GM12878 (cell line): ENCODE measurements at regions of chr6 and their contacts with region 1.

Region 1: DNA sequence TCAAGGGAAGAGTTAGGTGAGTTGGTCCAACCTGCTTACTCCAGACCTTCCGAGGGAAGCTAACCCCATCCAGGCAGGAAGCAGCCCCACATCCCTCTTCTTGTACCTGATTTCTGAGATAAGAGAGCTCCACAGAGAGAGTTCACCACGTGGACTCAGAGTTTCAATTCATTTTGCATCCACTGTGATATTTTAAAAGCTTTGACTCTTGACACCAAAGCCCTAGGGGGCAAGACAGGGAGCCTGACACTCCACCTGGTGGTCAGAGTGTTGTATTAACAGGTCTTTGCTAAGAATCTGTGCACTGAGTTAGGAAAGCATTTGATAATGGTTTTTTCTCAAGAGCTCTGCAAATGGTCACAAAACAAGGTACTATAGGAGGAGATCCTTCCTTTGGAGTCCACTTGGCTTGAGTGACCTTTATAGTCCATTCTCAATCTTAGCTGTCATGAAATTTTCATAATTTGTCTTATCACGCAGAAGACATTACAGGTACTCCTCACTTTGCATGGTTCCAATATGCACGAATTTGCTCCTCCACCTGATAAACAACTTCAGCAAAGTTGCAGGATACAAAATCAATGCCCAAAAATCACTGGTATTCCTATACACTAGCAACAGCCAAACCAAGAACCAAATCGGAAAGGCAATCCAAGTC is 56.2 kb upstream of the RIPOR2 start:
- DNase-seq: peak; percentile 54
- ATAC-seq: peak; percentile 98
- H3K4me3 ChIP-seq: no peak overlapping the region
- H3K27ac ChIP-seq: no peak overlapping the region
- H3K4me1 ChIP-seq: peaks cover 6% of the 10 kb centered on the region
- H3K27me3 ChIP-seq: no peaks in the 10 kb centered on the region
- CTCF ChIP-seq: peak; percentile 77 to 81 (median 79)
- EP300 ChIP-seq: no peak
- POLR2A ChIP-seq: no peak
- RAD21 ChIP-seq: peak; percentile 99

Region 2: GRCh38 chr6:24861934-24862333 is 130.0 kb before region 1 on chr6:
- CTCF ChIA-PET with region 1: interaction called, 230 read pairs
- POLR2A ChIA-PET with region 1: interaction called, 3 read pairs
- RAD21 ChIA-PET with region 1: interaction called, 160 read pairs
- SMC1A ChIA-PET with region 1: interaction called, 243 read pairs
- in situ Hi-C with region 1: no loop called
- intact Hi-C with region 1: no loop called
- DNase-seq: peak; percentile 65
- ATAC-seq: peak; percentile 93
- H3K4me3 ChIP-seq: peak overlapping the region; percentile 24; the same call in 1 of the 2 replicates
- H3K27ac ChIP-seq: peak overlapping the region; percentile 2; the same call in 1 of the 2 replicates
- H3K4me1 ChIP-seq: peaks cover 32% of the 10 kb centered on the region
- H3K27me3 ChIP-seq: no peaks in the 10 kb centered on the region
- CTCF ChIP-seq: no peak
- EP300 ChIP-seq: peak; percentile 20 to 46; a peak in 1 of 4 replicates
- POLR2A ChIP-seq: no peak
- RAD21 ChIP-seq: no peak

Region 3: GRCh38 chr6:24902782-24903181 is 89.2 kb before region 1 on chr6:
- CTCF ChIA-PET with region 1: interaction called, 90 read pairs
- POLR2A ChIA-PET with region 1: no interaction called
- RAD21 ChIA-PET with region 1: interaction called, 80 read pairs
- SMC1A ChIA-PET with region 1: interaction called, 93 read pairs
- in situ Hi-C with region 1: no loop called
- intact Hi-C with region 1: no loop called
- DNase-seq: no peak
- ATAC-seq: no peak
- H3K4me3 ChIP-seq: no peak overlapping the region
- H3K27ac ChIP-seq: no peak overlapping the region
- H3K4me1 ChIP-seq: no peaks in the 10 kb centered on the region
- H3K27me3 ChIP-seq: no peaks in the 10 kb centered on the region
- CTCF ChIP-seq: no peak
- EP300 ChIP-seq: no peak
- POLR2A ChIP-seq: no peak
- RAD21 ChIP-seq: no peak

Region 4: DNA sequence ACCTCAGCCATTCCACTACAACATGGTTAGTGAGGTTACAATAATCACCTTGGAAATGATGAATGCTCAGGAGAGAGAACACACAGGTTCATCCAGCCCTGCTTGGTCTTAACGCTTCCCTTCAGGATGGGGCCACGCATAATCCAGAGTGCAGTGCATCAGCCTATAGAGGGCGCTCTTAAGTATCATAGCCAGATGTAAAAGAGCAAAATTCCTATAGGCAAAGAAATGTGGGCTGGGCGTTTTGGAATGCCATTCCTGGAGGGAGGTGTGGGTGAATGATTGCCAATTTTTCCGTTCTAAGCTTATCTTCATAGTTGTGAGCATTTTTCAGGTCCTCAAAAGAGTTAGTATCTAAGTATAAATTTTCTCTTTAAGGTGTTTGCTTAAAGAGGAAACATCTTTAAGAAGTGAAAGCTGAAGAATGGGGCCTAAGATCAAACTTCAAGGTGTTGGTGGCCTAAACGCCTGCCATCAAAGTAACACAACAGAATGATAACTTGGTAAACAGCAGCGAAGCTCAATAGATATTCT is 58.0 kb before region 1 on chr6:
- CTCF ChIA-PET with region 1: interaction called, 376 read pairs
- POLR2A ChIA-PET with region 1: interaction called, 20 read pairs
- RAD21 ChIA-PET with region 1: interaction called, 229 read pairs
- SMC1A ChIA-PET with region 1: interaction called, 299 read pairs
- in situ Hi-C with region 1: no loop called
- intact Hi-C with region 1: loop called (anchors 1 kb)
- DNase-seq: no peak
- ATAC-seq: peak; percentile 14; the same call in 1 of the 3 replicates
- H3K4me3 ChIP-seq: peak overlapping the region; percentile 74
- H3K27ac ChIP-seq: peak overlapping the region; percentile 75
- H3K4me1 ChIP-seq: peaks cover 55% of the 10 kb centered on the region
- H3K27me3 ChIP-seq: no peaks in the 10 kb centered on the region
- CTCF ChIP-seq: peak; percentile 78 to 95 (median 83)
- EP300 ChIP-seq: no peak
- POLR2A ChIP-seq: no peak
- RAD21 ChIP-seq: peak; percentile 57; the same call in 1 of the 2 replicates

Region 5: DNA sequence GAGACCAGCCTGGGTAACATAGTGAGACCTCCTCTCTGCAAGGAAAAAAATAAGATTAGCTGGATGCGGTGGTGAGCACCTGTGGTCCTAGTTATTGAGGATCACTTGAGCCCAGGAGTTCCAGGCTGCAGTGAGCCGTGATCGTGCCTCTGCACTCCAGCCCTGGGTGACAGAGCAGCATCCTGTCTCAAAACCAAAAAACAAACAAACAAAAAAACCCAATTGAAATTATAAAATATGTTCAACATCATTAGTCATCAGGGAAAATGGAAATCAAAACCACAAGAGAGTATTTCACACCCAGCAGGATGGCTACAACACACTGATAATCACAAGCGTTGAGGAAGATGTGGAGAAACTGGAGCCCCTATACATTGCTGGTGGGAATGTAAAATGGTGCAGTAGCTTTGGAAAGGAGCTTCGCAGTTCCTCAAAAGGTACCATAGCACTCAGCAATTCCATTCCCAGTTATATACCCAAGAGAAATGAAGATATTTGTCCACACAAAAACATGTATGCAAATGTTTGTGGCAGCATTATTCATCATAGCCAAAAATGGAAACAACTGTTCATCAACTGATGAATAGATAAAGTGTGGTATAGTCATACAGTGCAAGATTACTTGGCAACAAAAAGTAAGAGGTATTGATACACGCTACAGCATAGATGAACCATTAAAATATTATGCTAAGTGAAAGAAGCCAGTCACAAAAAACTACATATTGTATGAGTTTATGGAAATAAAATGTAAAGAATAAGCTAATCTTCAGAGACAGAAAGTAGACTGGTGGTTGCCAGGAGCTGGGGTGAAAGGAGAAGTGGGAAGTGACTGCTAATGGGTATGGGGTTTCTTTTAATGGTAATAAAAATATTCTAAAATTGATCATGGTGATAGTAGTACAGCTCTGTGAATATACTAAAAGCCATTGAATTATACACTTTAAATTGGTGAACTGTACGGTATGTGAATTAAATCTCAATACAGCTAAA is 17.5 kb before region 1 on chr6:
- CTCF ChIA-PET with region 1: interaction called, 31 read pairs
- POLR2A ChIA-PET with region 1: interaction called, 3 read pairs
- RAD21 ChIA-PET with region 1: interaction called, 30 read pairs
- SMC1A ChIA-PET with region 1: interaction called, 21 read pairs
- in situ Hi-C with region 1: no loop called
- intact Hi-C with region 1: no loop called
- DNase-seq: no peak
- ATAC-seq: peak; percentile 95
- H3K4me3 ChIP-seq: no peak overlapping the region
- H3K27ac ChIP-seq: no peak overlapping the region
- H3K4me1 ChIP-seq: peaks cover 10% of the 10 kb centered on the region
- H3K27me3 ChIP-seq: no peaks in the 10 kb centered on the region
- CTCF ChIP-seq: no peak
- EP300 ChIP-seq: no peak; a peak in 1 of 4 replicates
- POLR2A ChIP-seq: no peak
- RAD21 ChIP-seq: no peak

Region 6: GRCh38 chr6:25027221-25027916 is 35.4 kb after region 1 on chr6:
- CTCF ChIA-PET with region 1: interaction called, 50 read pairs
- POLR2A ChIA-PET with region 1: no interaction called
- RAD21 ChIA-PET with region 1: interaction called, 27 read pairs
- SMC1A ChIA-PET with region 1: interaction called, 33 read pairs
- in situ Hi-C with region 1: no loop called
- intact Hi-C with region 1: no loop called
- DNase-seq: peak; percentile 60
- ATAC-seq: peak; percentile 98
- H3K4me3 ChIP-seq: 0 out of 2 replicates have a peak overlapping the region, but pooled peaks have one; percentile 34
- H3K27ac ChIP-seq: no peak overlapping the region
- H3K4me1 ChIP-seq: peaks cover 7% of the 10 kb centered on the region
- H3K27me3 ChIP-seq: no peaks in the 10 kb centered on the region
- CTCF ChIP-seq: peak; percentile 71 to 82 (median 71)
- EP300 ChIP-seq: no peak
- POLR2A ChIP-seq: no peak
- RAD21 ChIP-seq: peak; percentile 86

Region 7: GRCh38 chr6:25070547-25071366 is 78.8 kb after region 1 on chr6:
- CTCF ChIA-PET with region 1: interaction called, 39 read pairs
- POLR2A ChIA-PET with region 1: no interaction called
- RAD21 ChIA-PET with region 1: interaction called, 31 read pairs
- SMC1A ChIA-PET with region 1: interaction called, 29 read pairs
- in situ Hi-C with region 1: no loop called
- intact Hi-C with region 1: loop called (anchors 1 kb)
- DNase-seq: peak; percentile 65
- ATAC-seq: peak; percentile 96
- H3K4me3 ChIP-seq: peak overlapping the region; percentile 70
- H3K27ac ChIP-seq: no peak overlapping the region
- H3K4me1 ChIP-seq: no peaks in the 10 kb centered on the region
- H3K27me3 ChIP-seq: no peaks in the 10 kb centered on the region
- CTCF ChIP-seq: peak; percentile 85 to 90 (median 88)
- EP300 ChIP-seq: no peak
- POLR2A ChIP-seq: no peak
- RAD21 ChIP-seq: peak; percentile 97